ENCODE measurements at regions of chr14 and their contacts with region 1.

Region 1: DNA sequence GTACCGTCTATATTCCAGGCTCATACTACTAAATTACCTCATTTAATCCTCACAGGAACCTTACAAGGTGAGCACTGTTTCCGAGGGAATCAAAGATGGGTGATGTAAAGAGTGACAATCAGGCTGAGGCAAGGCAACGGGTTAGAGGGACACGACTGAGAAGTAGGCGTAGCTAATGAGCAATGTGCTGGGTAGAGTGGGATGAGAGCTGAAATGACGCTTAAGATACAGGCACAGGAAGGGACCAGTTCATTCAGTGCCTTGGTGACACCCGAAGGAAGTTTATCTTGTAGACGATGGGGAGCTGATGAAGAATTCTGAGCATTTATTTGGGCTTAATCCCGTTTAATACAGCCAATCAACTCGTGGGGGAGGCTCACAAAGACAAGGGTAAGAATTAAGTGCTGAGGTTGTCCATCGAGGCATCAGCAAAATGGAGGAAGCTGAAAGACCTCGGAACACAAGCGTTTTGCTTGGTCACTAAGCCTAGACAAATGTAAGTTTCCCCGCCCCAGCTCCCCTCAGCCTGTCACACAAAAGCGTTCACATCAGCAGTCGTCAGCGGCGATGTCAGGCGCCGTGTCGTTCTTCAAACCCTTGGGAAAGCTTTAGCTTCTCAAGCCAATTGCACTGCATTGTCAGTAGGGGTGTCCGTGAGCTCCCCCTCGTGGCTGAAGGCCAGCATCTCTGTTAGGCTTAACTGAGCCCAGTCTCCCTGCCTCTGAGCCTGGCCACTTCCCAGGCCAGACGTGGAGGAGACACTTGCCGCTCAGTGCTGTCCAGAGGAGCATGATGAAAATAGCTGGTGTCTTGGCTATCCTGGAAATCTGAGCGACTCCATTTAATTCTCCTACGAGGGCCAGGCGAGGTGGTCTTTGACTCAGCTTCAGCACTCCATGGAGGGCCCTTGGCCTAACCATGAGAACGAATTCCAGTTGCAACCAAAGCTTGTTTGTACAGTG is 288.5 kb upstream of the G2E3 start:
- DNase-seq: peak; percentile 91
- H3K4me3 ChIP-seq: peak overlapping the region; percentile 16
- H3K27ac ChIP-seq: no peak overlapping the region
- H3K4me1 ChIP-seq: no peaks in the 10 kb centered on the region
- H3K27me3 ChIP-seq: peaks cover 43% of the 10 kb centered on the region
- CTCF ChIP-seq: peak; percentile 94

Region 2: DNA sequence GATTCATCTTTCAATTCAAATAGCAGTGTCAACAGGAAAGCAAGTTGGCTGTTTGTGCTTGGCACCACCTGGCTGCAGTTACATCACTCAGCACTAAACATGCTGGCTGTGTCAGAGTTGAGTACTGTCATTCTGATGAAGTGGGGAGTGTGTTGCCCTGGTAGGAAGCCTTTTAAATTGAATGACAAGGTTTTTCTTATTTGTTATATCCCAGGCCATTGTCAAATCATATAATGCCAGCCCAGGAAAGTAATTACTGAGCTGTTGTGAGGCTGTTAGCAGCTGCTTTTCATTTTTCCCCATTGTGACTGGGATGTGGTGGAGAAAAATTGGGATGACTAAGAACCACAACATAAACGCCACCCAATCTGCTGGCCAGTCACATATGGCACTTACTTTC is 236.3 kb before region 1 on chr14:
- CTCF ChIA-PET with region 1: no interaction called
- POLR2A ChIA-PET with region 1: no interaction called
- intact Hi-C with region 1: no loop called
- DNase-seq: no peak
- H3K4me3 ChIP-seq: no peak overlapping the region
- H3K27ac ChIP-seq: no peak overlapping the region
- H3K4me1 ChIP-seq: no peaks in the 10 kb centered on the region
- H3K27me3 ChIP-seq: peaks cover 4% of the 10 kb centered on the region
- CTCF ChIP-seq: no peak

Region 3: GRCh38 chr14:30283826-30284446 is 13.5 kb after region 1 on chr14:
- CTCF ChIA-PET with region 1: interaction called, 15 read pairs
- POLR2A ChIA-PET with region 1: no interaction called
- intact Hi-C with region 1: no loop called
- DNase-seq: peak; percentile 56
- H3K4me3 ChIP-seq: no peak overlapping the region
- H3K27ac ChIP-seq: no peak overlapping the region
- H3K4me1 ChIP-seq: no peaks in the 10 kb centered on the region
- H3K27me3 ChIP-seq: no peaks in the 10 kb centered on the region
- CTCF ChIP-seq: peak; percentile 90

Measured in A673 (cell line).